GM12878 (cell line): ENCODE measurements at regions of chrX and their contacts with region 1.

Region 1: GRCh38 chrX:38192007-38192810 is 28.5 kb downstream of the SRPX start:
- DNase-seq: no peak
- ATAC-seq: peak; percentile 87
- H3K4me3 ChIP-seq: no peak overlapping the region
- H3K27ac ChIP-seq: no peak overlapping the region
- H3K4me1 ChIP-seq: 0 out of 2 replicates have a peak, but pooled peaks cover 2% of the 10 kb centered on the region
- H3K27me3 ChIP-seq: no peaks in the 10 kb centered on the region; a peak in 1 of 4 replicates
- CTCF ChIP-seq: peak; percentile 45 to 54 (median 51)
- EP300 ChIP-seq: no peak
- POLR2A ChIP-seq: no peak
- RAD21 ChIP-seq: peak; percentile 68

Region 2: DNA sequence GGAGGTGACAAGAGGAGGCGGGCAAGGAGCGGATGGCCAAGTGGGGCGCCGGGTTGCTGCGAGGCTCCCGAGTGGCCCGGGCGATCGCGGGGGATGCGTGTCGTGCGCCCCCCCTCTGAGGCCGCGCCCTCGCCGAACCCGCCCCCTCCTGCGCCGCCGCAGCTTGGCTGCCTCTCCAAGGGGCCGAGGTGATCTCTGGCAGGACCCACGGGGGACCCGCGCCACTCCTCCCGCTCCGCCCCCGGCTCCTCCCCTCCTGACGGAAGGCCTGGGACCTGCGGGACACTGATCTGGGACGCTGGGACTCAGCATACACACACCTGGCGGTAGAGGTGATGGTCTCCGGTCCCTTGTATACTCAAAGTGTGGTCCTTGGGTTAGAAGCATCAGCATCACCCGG is 1206.0 kb before region 1 on chrX:
- CTCF ChIA-PET with region 1: no interaction called
- POLR2A ChIA-PET with region 1: no interaction called
- RAD21 ChIA-PET with region 1: no interaction called
- SMC1A ChIA-PET with region 1: no interaction called
- in situ Hi-C with region 1: no loop called
- intact Hi-C with region 1: no loop called
- DNase-seq: no peak
- ATAC-seq: no peak
- H3K4me3 ChIP-seq: no peak overlapping the region
- H3K27ac ChIP-seq: no peak overlapping the region
- H3K4me1 ChIP-seq: no peaks in the 10 kb centered on the region
- H3K27me3 ChIP-seq: no peaks in the 10 kb centered on the region
- CTCF ChIP-seq: no peak
- EP300 ChIP-seq: no peak
- POLR2A ChIP-seq: no peak
- RAD21 ChIP-seq: no peak

Region 3: GRCh38 chrX:38103857-38104812 is 88.1 kb before region 1 on chrX:
- CTCF ChIA-PET with region 1: no interaction called
- POLR2A ChIA-PET with region 1: no interaction called
- RAD21 ChIA-PET with region 1: no interaction called
- SMC1A ChIA-PET with region 1: no interaction called
- in situ Hi-C with region 1: no loop called
- intact Hi-C with region 1: no loop called
- DNase-seq: peak; percentile 76
- ATAC-seq: peak; percentile 89
- H3K4me3 ChIP-seq: no peak overlapping the region
- H3K27ac ChIP-seq: peak overlapping the region; percentile 51; the same call in 1 of the 2 replicates
- H3K4me1 ChIP-seq: no peaks in the 10 kb centered on the region
- H3K27me3 ChIP-seq: no peaks in the 10 kb centered on the region
- CTCF ChIP-seq: no peak
- EP300 ChIP-seq: peak in 1 of 2 experiments; percentile 58; a peak in 2 of 4 replicates
- POLR2A ChIP-seq: no peak
- RAD21 ChIP-seq: no peak

Region 4: DNA sequence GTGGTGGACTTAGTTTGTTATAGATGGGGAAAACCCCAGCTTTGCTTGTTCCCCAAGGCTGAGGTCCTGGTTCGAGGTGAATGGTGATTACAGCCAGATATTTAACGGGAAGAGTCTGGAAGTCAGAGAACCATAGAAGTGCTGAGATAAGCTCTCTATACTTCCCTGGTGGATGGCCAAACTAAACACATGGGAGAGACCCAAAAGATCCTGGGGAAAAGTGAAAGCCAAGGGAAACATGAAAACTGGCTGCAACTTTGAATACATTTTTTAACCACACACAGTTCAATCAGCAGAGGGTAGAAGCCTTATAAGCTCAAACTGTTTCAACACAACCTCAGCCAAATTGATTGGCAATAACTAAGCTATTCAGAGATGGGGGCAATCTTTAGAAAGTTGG is 57.8 kb after region 1 on chrX:
- CTCF ChIA-PET with region 1: no interaction called
- POLR2A ChIA-PET with region 1: no interaction called
- RAD21 ChIA-PET with region 1: no interaction called
- SMC1A ChIA-PET with region 1: no interaction called
- in situ Hi-C with region 1: no loop called
- intact Hi-C with region 1: loop called (anchors 5 kb)
- DNase-seq: no peak
- ATAC-seq: no peak
- H3K4me3 ChIP-seq: no peak overlapping the region
- H3K27ac ChIP-seq: no peak overlapping the region
- H3K4me1 ChIP-seq: no peaks in the 10 kb centered on the region
- H3K27me3 ChIP-seq: no peaks in the 10 kb centered on the region
- CTCF ChIP-seq: no peak
- EP300 ChIP-seq: no peak
- POLR2A ChIP-seq: no peak
- RAD21 ChIP-seq: no peak